ENCODE measurements at regions of chr1 and their contacts with region 1.

Region 1: GRCh38 chr1:167220537-167221125 is at the start of gene POU2F1:
- DNase-seq: peak; percentile 99
- ATAC-seq: peak; percentile 82
- H3K4me3 Mint-ChIP-seq: peak within 1 kb of the TSS; percentile 96
- H3K27ac Mint-ChIP-seq: peak within 1 kb of the TSS; percentile 99
- H3K4me1 Mint-ChIP-seq: peaks cover 43% of the 10 kb centered on the region
- H3K27me3 Mint-ChIP-seq: no peaks in the 10 kb centered on the region
- total RNA-seq, gene POU2F1: 20.3 to 21.6 TPM

Region 2: GRCh38 chr1:165630629-165631341 is 1589.8 kb before region 1 on chr1 and contains the start of gene MGST3:
- CTCF ChIA-PET with region 1: no interaction called
- POLR2A ChIA-PET with region 1: no interaction called
- intact Hi-C with region 1: loop called in 1 of 2 experiments (anchors 5 kb)
- DNase-seq: peak; percentile 99
- ATAC-seq: peak; percentile 91
- H3K4me3 Mint-ChIP-seq: no peak within 1 kb of the TSS
- H3K27ac Mint-ChIP-seq: no peak within 1 kb of the TSS
- H3K4me1 Mint-ChIP-seq: peaks cover 17% of the 10 kb centered on the region
- H3K27me3 Mint-ChIP-seq: no peaks in the 10 kb centered on the region
- total RNA-seq, gene MGST3: 49.1 to 52.1 TPM

Region 3: DNA sequence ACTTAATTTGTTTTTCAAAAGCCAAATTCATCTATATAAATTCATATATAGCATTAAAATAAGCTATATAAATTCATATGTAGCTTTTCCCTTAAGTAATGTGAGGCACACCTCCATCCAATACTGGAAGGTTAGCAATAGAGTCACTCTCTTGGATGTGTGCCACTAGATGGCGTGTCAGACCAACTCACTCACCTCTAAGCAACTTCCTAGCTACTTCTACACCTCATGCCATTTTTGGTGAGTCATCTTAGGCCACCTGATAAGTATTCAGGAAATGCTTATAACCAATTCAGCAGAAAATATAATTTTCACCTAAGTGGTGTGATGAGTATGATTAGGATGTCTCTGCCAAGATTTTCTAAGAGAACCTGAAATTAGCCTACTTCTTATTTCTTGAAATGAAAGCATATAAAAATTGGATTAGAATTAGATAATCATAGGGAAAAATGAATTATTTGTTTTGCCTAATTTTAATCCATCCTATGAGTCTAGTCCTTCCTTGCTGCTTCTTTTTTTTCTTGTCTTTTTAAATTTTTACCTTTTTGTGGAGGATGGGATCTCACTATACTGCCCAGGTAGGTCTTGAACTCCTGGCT is 310.1 kb before region 1 on chr1:
- CTCF ChIA-PET with region 1: interaction called, 28 read pairs
- POLR2A ChIA-PET with region 1: no interaction called
- intact Hi-C with region 1: no loop called
- DNase-seq: peak; percentile 87
- ATAC-seq: peak; percentile 96
- H3K4me3 Mint-ChIP-seq: no peak overlapping the region
- H3K27ac Mint-ChIP-seq: no peak overlapping the region
- H3K4me1 Mint-ChIP-seq: peaks cover 13% of the 10 kb centered on the region
- H3K27me3 Mint-ChIP-seq: no peaks in the 10 kb centered on the region

Region 4: DNA sequence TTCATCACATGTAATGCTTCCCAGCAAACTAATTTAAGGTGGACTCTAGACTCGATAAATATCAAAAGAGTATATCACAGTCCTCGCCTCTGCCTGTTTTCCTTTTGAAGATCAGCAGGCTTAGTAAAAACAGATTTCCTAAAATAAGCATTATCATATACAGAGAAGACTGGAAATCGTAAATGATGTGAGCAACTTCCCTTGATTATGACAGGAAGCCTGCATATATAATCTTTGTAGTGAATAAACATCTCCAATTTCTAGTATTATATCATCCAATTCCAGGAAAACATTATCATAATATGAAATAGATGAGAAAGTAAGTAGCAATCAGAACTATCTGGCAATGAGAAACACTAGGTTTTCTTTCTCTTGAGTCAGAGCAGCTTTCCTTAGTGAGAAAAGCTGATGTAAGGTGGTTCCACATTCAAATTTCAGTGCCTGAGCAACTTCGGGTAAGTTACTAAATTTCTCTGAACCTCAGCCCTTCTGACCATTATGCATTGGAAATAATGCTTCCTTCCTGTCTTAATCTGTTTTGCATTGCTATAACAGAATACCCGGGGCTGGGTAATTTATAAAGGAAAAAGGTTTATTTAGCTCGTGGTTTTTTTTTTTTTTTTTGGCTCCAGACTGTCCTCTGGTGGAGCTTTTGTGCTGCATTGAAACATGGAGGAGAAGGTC is 12.5 kb before region 1 on chr1:
- CTCF ChIA-PET with region 1: interaction called, 16 read pairs
- POLR2A ChIA-PET with region 1: interaction called, 10 read pairs
- intact Hi-C with region 1: loop called in 1 of 2 experiments (anchors 1 kb)
- DNase-seq: no peak
- ATAC-seq: peak; percentile 76
- H3K4me3 Mint-ChIP-seq: no peak overlapping the region
- H3K27ac Mint-ChIP-seq: peak overlapping the region; percentile 89
- H3K4me1 Mint-ChIP-seq: peaks cover 23% of the 10 kb centered on the region
- H3K27me3 Mint-ChIP-seq: no peaks in the 10 kb centered on the region

Region 5: DNA sequence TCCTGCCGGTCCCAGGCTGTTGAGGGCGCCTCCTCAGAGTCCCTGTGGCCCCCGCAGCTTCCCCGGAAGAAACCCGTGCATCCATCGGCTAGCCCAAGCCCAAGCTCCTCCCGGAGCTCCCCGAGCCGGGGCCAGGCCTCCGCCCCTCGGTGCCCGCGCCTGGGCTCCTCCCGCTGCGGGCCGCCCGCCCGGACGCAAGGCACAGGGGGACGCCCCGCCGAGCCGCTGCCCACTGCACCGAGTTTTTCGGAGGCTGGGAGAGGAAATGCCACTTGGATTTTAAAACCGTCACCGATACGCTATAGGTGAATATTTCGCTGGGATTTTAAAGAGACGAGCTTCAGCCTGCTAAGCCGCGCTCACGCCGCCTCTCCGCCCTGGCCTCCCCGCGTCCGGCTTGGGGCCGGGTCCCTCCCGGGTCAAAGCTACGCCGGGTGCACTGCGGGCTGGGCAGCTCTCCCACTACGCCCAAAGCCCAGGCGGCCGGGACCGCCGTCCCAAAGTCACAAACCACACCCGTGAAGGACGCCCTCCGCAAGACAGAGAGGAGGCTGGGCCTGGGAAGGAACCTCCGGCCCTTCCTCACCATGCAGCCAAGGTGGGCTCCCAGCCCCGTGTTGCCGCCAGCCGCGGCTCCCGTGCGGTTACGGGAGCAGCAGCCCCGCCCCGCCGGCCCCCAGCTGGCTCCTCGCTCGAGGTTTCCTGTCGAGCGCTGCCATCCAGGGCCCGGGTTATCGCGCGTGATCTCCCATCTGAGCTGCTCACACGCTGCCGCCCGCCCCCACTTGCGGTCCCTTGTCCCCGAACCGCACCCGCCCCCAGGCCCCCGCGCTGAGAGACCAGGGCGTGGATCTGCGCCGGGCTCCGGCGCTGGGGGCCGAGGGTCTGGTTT is 234.5 kb after region 1 on chr1:
- CTCF ChIA-PET with region 1: no interaction called
- POLR2A ChIA-PET with region 1: interaction called, 9 read pairs
- intact Hi-C with region 1: loop called in 1 of 2 experiments (anchors 2 kb)
- DNase-seq: peak; percentile 88
- ATAC-seq: peak; percentile 58
- H3K4me3 Mint-ChIP-seq: peak overlapping the region; percentile 75
- H3K27ac Mint-ChIP-seq: peak overlapping the region; percentile 86
- H3K4me1 Mint-ChIP-seq: peaks cover 78% of the 10 kb centered on the region
- H3K27me3 Mint-ChIP-seq: no peaks in the 10 kb centered on the region

Region 6: GRCh38 chr1:167627865-167628641 is 407.4 kb after region 1 on chr1:
- CTCF ChIA-PET with region 1: no interaction called
- POLR2A ChIA-PET with region 1: no interaction called
- intact Hi-C with region 1: loop called in 1 of 2 experiments (anchors 2 kb)
- DNase-seq: peak; percentile 87
- ATAC-seq: peak; percentile 85
- H3K4me3 Mint-ChIP-seq: peak overlapping the region; percentile 85
- H3K27ac Mint-ChIP-seq: peak overlapping the region; percentile 98
- H3K4me1 Mint-ChIP-seq: peaks cover 53% of the 10 kb centered on the region
- H3K27me3 Mint-ChIP-seq: no peaks in the 10 kb centered on the region

Region 7: GRCh38 chr1:168225476-168226190 is 1005.0 kb after region 1 on chr1 and contains the start of gene SFT2D2:
- CTCF ChIA-PET with region 1: no interaction called
- POLR2A ChIA-PET with region 1: no interaction called
- intact Hi-C with region 1: loop called in 1 of 2 experiments (anchors 2 kb)
- DNase-seq: peak; percentile 88
- ATAC-seq: peak; percentile 90
- H3K4me3 Mint-ChIP-seq: peak within 1 kb of the TSS; percentile 86
- H3K27ac Mint-ChIP-seq: peak within 1 kb of the TSS; percentile 86
- H3K4me1 Mint-ChIP-seq: peaks cover 49% of the 10 kb centered on the region
- H3K27me3 Mint-ChIP-seq: peaks cover 3% of the 10 kb centered on the region
- total RNA-seq, gene SFT2D2: 25.2 to 42.3 TPM

Measured in activated CD4-positive, alpha-beta T cell treated with anti-CD3 and anti-CD28 coated beads for 36 hours (primary cell).